Activated CD4-positive, alpha-beta T cell treated with anti-CD3 and anti-CD28 coated beads for 36 hours (primary cell): ENCODE measurements at regions of chr2 and their contacts with region 1.

Region 1: DNA sequence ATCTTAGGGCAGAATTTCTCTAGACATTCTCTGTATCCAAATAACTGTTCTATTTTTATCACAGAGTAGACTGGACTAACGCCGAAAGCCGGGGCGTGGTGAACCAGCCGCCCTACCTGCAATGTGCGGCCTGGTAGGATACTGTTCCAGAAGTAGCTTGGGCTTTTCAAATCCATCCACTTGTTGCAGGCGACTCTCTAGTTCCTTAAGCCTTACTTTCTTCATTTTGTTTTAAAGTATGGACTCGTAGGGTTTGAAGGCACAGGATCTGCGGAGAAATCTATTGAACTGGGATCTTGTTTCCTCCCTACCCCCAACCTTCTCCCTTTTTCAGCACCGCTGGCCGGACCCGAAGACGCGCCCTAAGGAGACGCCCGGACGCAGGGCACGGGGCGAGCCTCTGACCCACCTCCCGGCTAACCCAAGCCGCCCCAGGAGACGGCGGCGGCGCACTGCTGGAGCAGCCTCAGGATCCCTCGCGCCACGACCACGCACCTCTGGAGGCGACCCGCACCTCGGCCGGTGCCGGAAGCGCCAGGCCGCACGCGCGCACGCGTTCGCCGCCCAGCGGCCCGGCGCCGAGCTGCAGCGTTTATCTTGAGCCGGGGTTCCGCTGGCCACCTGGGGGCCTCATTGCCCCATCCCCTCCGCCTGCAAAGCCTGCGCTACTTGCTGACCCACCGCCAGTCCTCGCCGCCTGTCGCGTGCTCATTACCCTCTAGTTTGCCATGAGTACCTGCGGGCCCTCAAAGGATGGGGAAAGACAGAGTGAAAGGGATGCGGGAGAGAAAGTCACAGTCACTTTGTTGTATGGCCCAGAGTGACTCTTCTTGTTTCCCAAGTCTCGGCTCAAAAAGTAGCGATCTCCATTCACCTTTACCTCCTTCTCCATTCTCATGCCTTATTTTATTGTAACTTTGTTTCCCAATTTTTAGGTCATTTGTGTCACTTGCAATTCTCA is at the start of gene METTL5:
- DNase-seq: peak; percentile 89
- ATAC-seq: peak; percentile 72
- H3K4me3 Mint-ChIP-seq: peak within 1 kb of the TSS; percentile 83
- H3K27ac Mint-ChIP-seq: peak within 1 kb of the TSS; percentile 89
- H3K4me1 Mint-ChIP-seq: peaks cover 55% of the 10 kb centered on the region
- H3K27me3 Mint-ChIP-seq: no peaks in the 10 kb centered on the region
- total RNA-seq, gene METTL5: 129 to 165 TPM

Region 2: GRCh38 chr2:169363560-169364150 is 461.0 kb before region 1 on chr2:
- CTCF ChIA-PET with region 1: no interaction called
- POLR2A ChIA-PET with region 1: no interaction called
- intact Hi-C with region 1: loop called in 1 of 2 experiments (anchors 10 kb)
- DNase-seq: peak; percentile 80
- ATAC-seq: peak; percentile 73
- H3K4me3 Mint-ChIP-seq: peak overlapping the region; percentile 86
- H3K27ac Mint-ChIP-seq: peak overlapping the region; percentile 49
- H3K4me1 Mint-ChIP-seq: peaks cover 29% of the 10 kb centered on the region
- H3K27me3 Mint-ChIP-seq: peaks cover 38% of the 10 kb centered on the region

Region 3: GRCh38 chr2:169694113-169694903 is 130.3 kb before region 1 on chr2 and contains the starts of genes CFAP210 and PHOSPHO2:
- CTCF ChIA-PET with region 1: interaction called, 3 read pairs
- POLR2A ChIA-PET with region 1: no interaction called
- intact Hi-C with region 1: loop called in 1 of 2 experiments (anchors 1 kb)
- DNase-seq: peak; percentile 99
- ATAC-seq: peak; percentile 99
- H3K4me3 Mint-ChIP-seq: peak within 1 kb of the TSS; percentile 84
- H3K27ac Mint-ChIP-seq: peak within 1 kb of the TSS; percentile 87
- H3K4me1 Mint-ChIP-seq: peaks cover 16% of the 10 kb centered on the region
- H3K27me3 Mint-ChIP-seq: peaks cover 3% of the 10 kb centered on the region
- total RNA-seq, gene CFAP210: 0.23 TPM in 1 of 2 experiments, not detected in the other
- total RNA-seq, gene PHOSPHO2: 2.2 to 3.5 TPM

Region 4: DNA sequence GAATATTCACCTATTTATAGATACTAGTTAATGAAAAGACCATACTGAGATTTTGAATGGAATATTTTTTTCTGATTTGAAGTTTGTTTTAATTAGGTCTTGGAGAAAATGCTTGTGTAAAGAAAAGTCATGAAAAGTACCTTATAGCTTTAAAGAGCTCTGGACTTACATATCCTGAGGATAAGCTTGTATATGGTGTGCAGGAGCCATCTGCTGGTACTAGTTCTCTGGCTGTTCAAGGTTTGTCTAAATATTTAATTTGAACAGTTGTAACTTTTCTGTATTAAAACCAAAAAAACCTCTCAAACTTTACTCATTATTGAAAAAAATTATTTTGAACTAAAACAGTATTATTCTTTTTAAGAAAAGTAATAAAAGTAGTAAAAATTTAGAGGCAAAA is 52.7 kb after region 1 on chr2:
- CTCF ChIA-PET with region 1: interaction called, 5 read pairs
- POLR2A ChIA-PET with region 1: no interaction called
- intact Hi-C with region 1: loop called in 1 of 2 experiments (anchors 2 kb)
- DNase-seq: no peak
- ATAC-seq: no peak
- H3K4me3 Mint-ChIP-seq: no peak overlapping the region
- H3K27ac Mint-ChIP-seq: no peak overlapping the region
- H3K4me1 Mint-ChIP-seq: no peaks in the 10 kb centered on the region
- H3K27me3 Mint-ChIP-seq: no peaks in the 10 kb centered on the region

Region 5: GRCh38 chr2:170361090-170361936 is 536.7 kb after region 1 on chr2:
- CTCF ChIA-PET with region 1: no interaction called
- POLR2A ChIA-PET with region 1: no interaction called
- intact Hi-C with region 1: loop called in 1 of 2 experiments (anchors 10 kb)
- DNase-seq: peak; percentile 76
- ATAC-seq: peak; percentile 58
- H3K4me3 Mint-ChIP-seq: no peak overlapping the region
- H3K27ac Mint-ChIP-seq: peak overlapping the region; percentile 90
- H3K4me1 Mint-ChIP-seq: peaks cover 29% of the 10 kb centered on the region
- H3K27me3 Mint-ChIP-seq: peaks cover 7% of the 10 kb centered on the region

Region 6: DNA sequence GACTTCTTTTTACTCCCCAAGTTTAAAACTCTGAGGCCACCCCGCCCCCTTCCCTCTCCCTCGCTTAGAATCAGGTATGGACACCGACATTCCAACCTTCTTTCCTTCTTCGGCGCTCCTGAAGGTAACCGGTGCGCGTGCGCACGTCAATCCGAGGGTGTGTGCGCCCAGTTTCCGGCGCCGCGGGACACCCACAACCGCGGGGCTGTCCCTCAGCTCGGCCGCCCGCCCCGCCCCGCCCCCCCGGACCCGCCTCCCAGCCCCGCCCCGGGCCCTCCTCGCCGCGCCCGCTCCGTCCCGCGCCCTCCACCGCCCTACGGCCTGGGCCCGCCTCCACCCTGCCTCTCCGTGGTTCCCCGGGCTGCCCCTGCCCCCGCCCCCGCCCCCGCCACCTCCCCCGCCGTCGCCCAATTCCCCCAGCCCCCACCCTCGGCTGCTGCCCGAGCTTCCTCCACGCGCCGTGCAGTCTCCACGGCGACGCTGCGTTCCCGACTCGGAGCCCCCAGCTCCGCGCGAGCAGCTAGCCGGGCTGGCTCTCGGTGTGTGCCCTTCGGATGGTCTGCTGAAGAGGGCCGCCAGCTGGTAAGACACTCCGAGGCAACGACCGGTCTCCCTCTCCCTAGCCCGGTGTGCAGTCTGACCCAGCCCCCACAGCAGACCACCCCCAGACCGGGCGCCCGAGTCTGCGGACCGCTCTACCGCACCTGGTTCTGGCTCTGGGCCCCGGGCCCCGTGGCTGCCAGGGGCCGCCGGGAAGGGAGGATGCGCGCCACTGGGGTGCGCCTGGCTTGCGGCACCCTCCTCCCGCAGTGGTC is 946.2 kb after region 1 on chr2:
- CTCF ChIA-PET with region 1: no interaction called
- POLR2A ChIA-PET with region 1: no interaction called
- intact Hi-C with region 1: loop called in 1 of 2 experiments (anchors 10 kb)
- DNase-seq: peak; percentile 83
- ATAC-seq: peak; percentile 88
- H3K4me3 Mint-ChIP-seq: peak overlapping the region; percentile 79
- H3K27ac Mint-ChIP-seq: peak overlapping the region; percentile 73
- H3K4me1 Mint-ChIP-seq: peaks cover 13% of the 10 kb centered on the region
- H3K27me3 Mint-ChIP-seq: peaks cover 8% of the 10 kb centered on the region